Naive thymus-derived CD4-positive, alpha-beta T cell (primary cell): ENCODE measurements at regions of chr15 and their contacts with region 1.

Region 1: GRCh38 chr15:76931397-76932007 is at the start of gene RCN2:
- DNase-seq: peak; percentile 81 to 95 (median 88)
- ATAC-seq: peak; percentile 99
- H3K4me3 ChIP-seq: peak within 1 kb of the TSS; percentile 70
- H3K4me3 Mint-ChIP-seq: peak within 1 kb of the TSS; percentile 89 to 95 (median 92)
- H3K27ac ChIP-seq: peak within 1 kb of the TSS; percentile 73
- H3K27ac Mint-ChIP-seq: peak within 1 kb of the TSS; percentile 76 to 96 (median 91)
- H3K4me1 ChIP-seq: peaks cover 4 to 14% of the 10 kb centered on the region in 2 donors
- H3K4me1 Mint-ChIP-seq: peaks cover 19 to 42% (median 33%) of the 10 kb centered on the region in 7 donors
- H3K27me3 ChIP-seq: no peaks in the 10 kb centered on the region
- H3K27me3 Mint-ChIP-seq: peaks cover 0 to 20% (median 0%) of the 10 kb centered on the region in 5 donors
- total RNA-seq, gene RCN2: 16.7 to 30.5 (median 28.1) TPM

Region 2: GRCh38 chr15:75903331-75904239 is 1027.9 kb before region 1 on chr15 and contains the start of gene FBXO22:
- CTCF ChIA-PET with region 1: no interaction called
- POLR2A ChIA-PET with region 1: no interaction called
- intact Hi-C with region 1: loop called in 1 of 2 experiments (anchors 10 kb)
- DNase-seq: peak; percentile 79 to 92 (median 85)
- ATAC-seq: peak; percentile 98
- H3K4me3 ChIP-seq: peak within 1 kb of the TSS; percentile 91
- H3K4me3 Mint-ChIP-seq: peak within 1 kb of the TSS; percentile 96 to 99 (median 98)
- H3K27ac ChIP-seq: peak within 1 kb of the TSS; percentile 79
- H3K27ac Mint-ChIP-seq: peak within 1 kb of the TSS; percentile 91 to 97 (median 94)
- H3K4me1 ChIP-seq: peaks cover 0 to 12% of the 10 kb centered on the region in 2 donors
- H3K4me1 Mint-ChIP-seq: peaks cover 15 to 70% (median 51%) of the 10 kb centered on the region in 7 donors
- H3K27me3 ChIP-seq: no peaks in the 10 kb centered on the region
- H3K27me3 Mint-ChIP-seq: no peaks in the 10 kb centered on the region
- total RNA-seq, gene FBXO22: 9.7 to 34.5 (median 25.5) TPM

Region 3: GRCh38 chr15:76994971-76995945 is 63.8 kb after region 1 on chr15 and contains the start of gene PSTPIP1:
- CTCF ChIA-PET with region 1: interaction called, 3 read pairs
- POLR2A ChIA-PET with region 1: interaction called, 34 read pairs
- intact Hi-C with region 1: loop called (anchors 2 kb)
- DNase-seq: peak; percentile 52 to 79 (median 74)
- ATAC-seq: peak; percentile 83
- H3K4me3 ChIP-seq: peak within 1 kb of the TSS; percentile 90
- H3K4me3 Mint-ChIP-seq: peak within 1 kb of the TSS; percentile 93 to 99 (median 96)
- H3K27ac ChIP-seq: peak within 1 kb of the TSS; percentile 80
- H3K27ac Mint-ChIP-seq: peak within 1 kb of the TSS; percentile 88 to 98 (median 96)
- H3K4me1 ChIP-seq: peaks cover 57 to 58% of the 10 kb centered on the region in 2 donors
- H3K4me1 Mint-ChIP-seq: peaks cover 61 to 76% (median 65%) of the 10 kb centered on the region in 7 donors
- H3K27me3 ChIP-seq: no peaks in the 10 kb centered on the region
- H3K27me3 Mint-ChIP-seq: no peaks in the 10 kb centered on the region
- total RNA-seq, gene PSTPIP1: 101 to 182 (median 146) TPM

Region 4: DNA sequence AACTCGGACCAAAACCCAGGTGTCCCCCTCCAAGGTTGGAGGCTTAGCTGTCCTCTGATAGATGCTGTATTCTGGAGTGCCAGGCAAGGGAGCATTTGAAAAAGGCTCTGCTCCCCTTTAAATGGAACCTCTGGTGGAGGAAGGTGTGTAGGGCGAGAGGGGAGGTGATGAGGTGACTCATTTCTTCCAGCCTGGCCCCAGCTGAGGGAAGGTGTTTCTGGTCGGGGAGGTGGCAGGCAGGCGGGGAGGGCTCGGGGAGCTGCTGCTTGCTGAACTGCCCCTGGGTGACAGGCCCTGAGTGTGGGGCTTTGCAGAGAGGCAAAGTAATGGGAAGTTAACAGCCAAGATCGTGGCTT is 82.3 kb after region 1 on chr15:
- CTCF ChIA-PET with region 1: no interaction called
- POLR2A ChIA-PET with region 1: interaction called, 5 read pairs
- intact Hi-C with region 1: loop called in 1 of 2 experiments (anchors 1 kb)
- DNase-seq: peak in 5 of 9 donors; percentile 45 to 82 (median 49)
- ATAC-seq: peak; percentile 73
- H3K4me3 ChIP-seq: peak overlapping the region; percentile 43
- H3K4me3 Mint-ChIP-seq: peak overlapping the region; percentile 64 to 91 (median 77)
- H3K27ac ChIP-seq: peak overlapping the region; percentile 58
- H3K27ac Mint-ChIP-seq: peak overlapping the region; percentile 76 to 97 (median 95)
- H3K4me1 ChIP-seq: peaks cover 62 to 99% of the 10 kb centered on the region in 2 donors
- H3K4me1 Mint-ChIP-seq: peaks cover 58 to 93% (median 75%) of the 10 kb centered on the region in 7 donors
- H3K27me3 ChIP-seq: no peaks in the 10 kb centered on the region
- H3K27me3 Mint-ChIP-seq: no peaks in the 10 kb centered on the region

Region 5: GRCh38 chr15:77070495-77071304 is 139.2 kb after region 1 on chr15 and contains the start of gene TSPAN3:
- CTCF ChIA-PET with region 1: no interaction called
- POLR2A ChIA-PET with region 1: no interaction called
- intact Hi-C with region 1: loop called in 1 of 2 experiments (anchors 1 kb)
- DNase-seq: peak; percentile 88 to 93 (median 92)
- ATAC-seq: peak; percentile 99
- H3K4me3 ChIP-seq: peak within 1 kb of the TSS; percentile 50
- H3K4me3 Mint-ChIP-seq: peak within 1 kb of the TSS; percentile 81 to 90 (median 86)
- H3K27ac ChIP-seq: peak within 1 kb of the TSS; percentile 62
- H3K27ac Mint-ChIP-seq: peak within 1 kb of the TSS; percentile 54 to 93 (median 80)
- H3K4me1 ChIP-seq: peaks cover 5 to 14% of the 10 kb centered on the region in 2 donors
- H3K4me1 Mint-ChIP-seq: peaks cover 7 to 48% (median 29%) of the 10 kb centered on the region in 7 donors
- H3K27me3 ChIP-seq: peaks cover 0 to 2% of the 10 kb centered on the region in 2 donors
- H3K27me3 Mint-ChIP-seq: peaks cover 0 to 22% (median 0%) of the 10 kb centered on the region in 5 donors
- total RNA-seq, gene TSPAN3: 17.5 to 24.4 (median 21.7) TPM